ENCODE measurements at regions of chr13 and their contacts with region 1.

Region 1: GRCh38 chr13:71801781-71802180 is 65.2 kb downstream of the DACH1 start:
- DNase-seq: no peak
- ATAC-seq: no peak
- H3K4me3 ChIP-seq: no peak overlapping the region
- H3K27ac ChIP-seq: no peak overlapping the region
- H3K4me1 ChIP-seq: no peaks in the 10 kb centered on the region
- H3K27me3 ChIP-seq: no peaks in the 10 kb centered on the region
- CTCF ChIP-seq: no peak

Region 2: GRCh38 chr13:72403396-72404010 is 601.7 kb after region 1 on chr13:
- CTCF ChIA-PET with region 1: interaction called, 10 read pairs
- POLR2A ChIA-PET with region 1: no interaction called
- in situ Hi-C with region 1: no loop called
- intact Hi-C with region 1: no loop called
- DNase-seq: no peak
- ATAC-seq: no peak
- H3K4me3 ChIP-seq: no peak overlapping the region
- H3K27ac ChIP-seq: no peak overlapping the region
- H3K4me1 ChIP-seq: no peaks in the 10 kb centered on the region
- H3K27me3 ChIP-seq: no peaks in the 10 kb centered on the region
- CTCF ChIP-seq: no peak

Region 3: DNA sequence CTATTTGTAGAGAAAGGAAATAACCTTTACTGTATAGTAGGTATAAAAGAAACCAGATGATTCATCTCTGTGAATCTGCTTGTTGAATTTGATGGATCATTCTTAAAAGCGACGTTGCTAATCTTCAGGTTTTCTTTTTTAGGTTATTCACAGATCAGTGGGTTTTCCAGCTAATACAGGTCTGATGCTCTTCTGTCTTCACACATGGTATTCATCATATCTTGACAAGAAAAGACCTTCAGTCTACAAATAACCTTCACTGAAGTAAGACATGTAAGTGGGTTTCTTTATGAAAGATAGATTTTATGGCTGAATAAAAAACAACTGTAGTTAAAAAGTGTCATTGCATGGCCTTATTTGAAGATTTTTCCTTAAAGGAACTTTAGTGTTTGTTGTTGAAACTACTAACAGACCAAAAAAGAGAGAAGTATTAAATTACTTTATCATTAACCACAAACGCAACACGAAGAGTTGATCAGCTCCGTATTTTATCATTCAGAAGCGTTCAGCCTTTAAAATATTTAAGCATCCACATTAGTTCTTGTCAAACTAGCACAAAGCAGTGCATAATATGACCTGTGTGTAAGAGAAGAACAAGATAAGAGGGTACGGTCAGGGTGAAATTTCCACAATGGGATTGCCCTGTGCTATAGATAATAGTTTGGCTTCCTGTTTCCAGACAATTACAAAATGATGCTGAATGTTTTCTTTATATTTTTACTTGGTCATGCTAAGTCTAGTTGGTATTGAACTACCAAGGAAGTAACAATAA is 626.2 kb after region 1 on chr13:
- CTCF ChIA-PET with region 1: no interaction called
- POLR2A ChIA-PET with region 1: no interaction called
- in situ Hi-C with region 1: no loop called
- intact Hi-C with region 1: no loop called
- DNase-seq: no peak
- ATAC-seq: no peak
- H3K4me3 ChIP-seq: no peak overlapping the region
- H3K27ac ChIP-seq: no peak overlapping the region
- H3K4me1 ChIP-seq: no peaks in the 10 kb centered on the region
- H3K27me3 ChIP-seq: no peaks in the 10 kb centered on the region
- CTCF ChIP-seq: no peak